Activated T-helper 1 cell treated with anti-CD3 and anti-CD28 coated beads, Interleukin-12 subunit alpha, Interleukin-12 subunit beta, Interleukin-2, Interleukin-4 antibody, amounts not matched to agents 30 ng/mL and 10 ng/mL and 1 ng/mL, durations not matched to agents 14 hours and 24 hours and 36 hours (primary cell): ENCODE measurements at regions of chr12 and their contacts with region 1.

Region 1: DNA sequence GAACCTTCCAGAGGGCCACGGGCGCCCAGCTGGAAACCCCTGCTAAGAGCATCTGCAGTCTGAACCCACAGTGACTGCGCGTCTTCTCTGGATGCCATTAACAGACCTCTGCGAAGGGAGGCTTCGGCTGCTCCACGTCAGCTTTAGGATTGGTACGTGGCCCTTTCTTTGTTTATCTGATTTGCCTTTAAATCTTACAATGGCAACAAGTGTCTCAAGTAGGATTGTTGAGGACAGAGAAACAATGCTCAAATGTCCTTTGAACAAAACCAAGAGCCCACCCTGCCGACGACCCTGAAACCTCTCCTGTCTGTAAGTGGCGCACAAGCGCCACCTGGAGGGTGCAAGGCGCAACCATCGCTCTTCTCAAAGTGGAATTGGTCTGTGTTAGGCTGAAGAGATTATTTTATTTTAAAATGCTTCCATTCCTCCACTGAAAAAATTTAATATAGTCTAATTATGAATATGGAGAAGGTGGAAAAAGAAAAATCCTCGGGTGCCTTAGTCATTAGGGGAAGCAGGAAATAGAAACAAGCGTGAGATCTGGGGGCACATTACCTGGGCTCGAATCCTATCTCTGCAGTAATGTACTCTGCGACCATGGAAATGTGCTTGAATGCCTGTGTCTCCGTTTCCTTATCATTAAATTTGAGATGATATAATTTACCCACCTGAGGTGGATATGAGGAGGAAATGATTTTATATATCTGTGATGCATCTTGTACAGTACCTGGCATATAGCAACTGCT is 82.6 kb upstream of the PTPRB start:
- DNase-seq: no peak
- H3K4me3 Mint-ChIP-seq: no peak overlapping the region
- H3K27ac Mint-ChIP-seq: no peak overlapping the region
- H3K4me1 Mint-ChIP-seq: peaks cover 5% of the 10 kb centered on the region
- H3K27me3 Mint-ChIP-seq: peaks cover 9% of the 10 kb centered on the region

Region 2: GRCh38 chr12:69900720-69901131 is 819.1 kb before region 1 on chr12:
- intact Hi-C with region 1: loop called (anchors 2 kb)
- DNase-seq: peak; percentile 29
- H3K4me3 Mint-ChIP-seq: no peak overlapping the region
- H3K27ac Mint-ChIP-seq: no peak overlapping the region
- H3K4me1 Mint-ChIP-seq: no peaks in the 10 kb centered on the region
- H3K27me3 Mint-ChIP-seq: peaks cover 2% of the 10 kb centered on the region

Region 3: GRCh38 chr12:70590051-70590450 is 129.8 kb before region 1 on chr12:
- intact Hi-C with region 1: loop called (anchors 1 kb)
- DNase-seq: peak; percentile 16
- H3K4me3 Mint-ChIP-seq: no peak overlapping the region
- H3K27ac Mint-ChIP-seq: no peak overlapping the region
- H3K4me1 Mint-ChIP-seq: no peaks in the 10 kb centered on the region
- H3K27me3 Mint-ChIP-seq: peaks cover under 1% of the 10 kb centered on the region